Posterior cingulate gyrus (tissue), 11 donors: ENCODE measurements at regions of chr11 and their contacts with region 1.

Region 1: GRCh38 chr11:7986768-7987559 is at the start of gene EIF3F:
- DNase-seq: peak; percentile 83 to 98 (median 88)

Region 2: DNA sequence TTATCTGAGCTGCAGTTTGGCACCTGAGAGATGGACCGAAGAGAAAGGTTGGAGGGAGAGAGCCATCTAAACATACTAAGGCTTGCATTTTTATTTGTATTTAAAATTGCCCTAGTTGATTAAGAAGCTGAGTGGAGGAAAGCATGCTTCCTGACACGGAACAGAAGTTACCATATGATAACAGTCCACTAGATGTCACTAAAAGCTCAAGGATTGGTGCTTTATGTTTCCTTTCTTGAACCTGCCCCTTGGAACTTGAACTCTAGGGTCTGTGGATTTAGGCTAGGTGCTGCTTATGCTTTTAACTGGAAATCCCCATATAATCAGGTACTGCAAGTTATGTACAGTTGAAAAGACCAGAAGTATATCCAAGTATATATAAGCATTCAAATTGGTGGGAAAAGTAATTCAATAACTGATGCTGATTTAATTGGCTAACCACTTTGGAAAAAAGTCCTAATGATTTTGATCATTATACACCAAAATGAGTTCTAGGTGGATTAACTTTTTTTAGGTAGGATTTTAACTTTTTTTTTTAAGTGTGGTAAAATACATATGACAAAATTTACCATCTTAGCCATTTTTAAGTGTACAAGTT is 888.6 kb before region 1 on chr11:
- intact Hi-C with region 1: loop called (anchors 2 kb)
- DNase-seq: no peak

Region 3: DNA sequence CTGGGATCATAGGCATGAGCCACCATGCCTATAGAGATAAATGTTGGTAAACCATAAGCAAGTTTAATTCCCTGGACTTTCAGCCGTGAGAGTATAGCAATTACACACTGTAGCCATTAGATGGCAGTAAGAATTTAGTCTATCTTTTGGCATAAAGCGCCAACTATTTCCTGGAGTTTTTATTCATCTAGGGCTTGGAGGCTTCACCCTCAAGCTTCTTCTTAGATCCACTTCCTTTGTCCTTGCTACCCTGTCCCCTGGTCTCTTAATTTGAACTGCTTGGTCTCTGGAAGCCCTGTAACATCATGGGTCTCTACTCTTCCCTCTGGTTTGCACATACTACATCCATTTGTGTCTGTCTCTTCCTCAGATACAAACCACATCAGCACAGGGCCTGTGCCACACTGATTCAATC is 94.1 kb before region 1 on chr11:
- intact Hi-C with region 1: loop called (anchors 1 kb)
- DNase-seq: no peak

Region 4: DNA sequence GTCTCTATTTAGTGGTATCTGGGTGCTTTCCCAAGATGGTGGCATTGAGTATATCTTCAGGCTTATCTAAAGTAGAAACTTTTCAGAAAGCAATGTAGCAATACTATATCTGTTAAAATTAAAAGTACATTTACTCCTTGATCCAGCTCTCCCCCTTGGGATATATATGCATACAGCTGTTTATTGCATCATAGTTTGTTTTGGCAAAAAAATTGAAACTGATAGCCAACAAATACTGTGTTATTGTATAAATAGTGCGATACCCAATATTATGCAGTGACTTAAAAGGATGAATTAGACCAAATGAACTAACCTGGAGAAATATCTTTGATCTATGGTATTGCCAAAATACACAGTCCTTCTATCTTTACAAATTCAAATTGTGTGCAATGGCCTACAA is 37.0 kb before region 1 on chr11:
- intact Hi-C with region 1: no loop called
- DNase-seq: no peak